PC-9 (cell line): ENCODE measurements at regions of chr16 and their contacts with region 1.

Region 1: DNA sequence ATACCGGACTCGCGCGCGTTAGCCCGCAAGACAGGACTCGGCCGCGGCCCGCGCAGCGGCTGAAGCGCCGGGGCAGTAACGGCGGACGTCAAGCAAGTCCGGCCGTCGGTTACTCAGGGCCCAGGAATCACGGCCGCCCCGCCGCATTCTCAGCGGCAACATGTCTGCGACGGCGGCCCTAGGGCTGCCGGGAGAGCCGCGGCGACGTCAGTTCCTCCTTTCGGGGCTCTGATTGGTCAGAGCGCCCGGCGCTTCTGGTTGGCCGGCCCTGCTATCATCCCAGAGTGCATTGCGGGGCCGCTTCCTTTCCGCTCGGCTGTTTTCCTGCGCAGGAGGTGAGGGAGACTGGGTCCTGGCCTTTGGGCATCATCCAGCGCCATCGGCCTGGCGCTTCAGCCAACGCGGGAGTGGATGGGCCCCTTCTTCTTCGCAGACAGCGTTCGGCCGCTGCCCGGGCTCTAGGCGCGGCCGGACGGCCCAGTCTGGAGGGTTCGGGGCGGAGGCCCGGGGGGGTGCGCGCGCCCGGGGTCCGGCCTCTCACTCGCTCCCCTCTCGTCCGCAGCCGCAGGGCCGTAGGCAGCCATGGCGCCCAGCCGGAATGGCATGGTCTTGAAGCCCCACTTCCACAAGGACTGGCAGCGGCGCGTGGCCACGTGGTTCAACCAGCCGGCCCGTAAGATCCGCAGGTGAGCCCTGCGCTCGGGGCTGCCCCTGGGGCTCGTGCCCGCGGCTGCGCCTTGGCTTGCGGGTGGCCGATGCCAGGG is at the start of gene RPL13:
- DNase-seq: peak; percentile 91 to 95
- H3K4me3 ChIP-seq: peak within 1 kb of the TSS; percentile 92
- H3K27ac ChIP-seq: peak within 1 kb of the TSS; percentile 96
- H3K4me1 ChIP-seq: peaks cover 49% of the 10 kb centered on the region
- H3K27me3 ChIP-seq: no peaks in the 10 kb centered on the region
- CTCF ChIP-seq: no peak
- total RNA-seq, gene RPL13: 2,045 and 3,124 TPM in 2 replicates

Region 2: GRCh38 chr16:89283449-89283848 is 277.1 kb before region 1 on chr16:
- CTCF ChIA-PET with region 1: no interaction called
- POLR2A ChIA-PET with region 1: interaction called, 12 read pairs
- intact Hi-C with region 1: no loop called
- DNase-seq: no peak
- H3K4me3 ChIP-seq: no peak overlapping the region
- H3K27ac ChIP-seq: no peak overlapping the region
- H3K4me1 ChIP-seq: no peaks in the 10 kb centered on the region
- H3K27me3 ChIP-seq: no peaks in the 10 kb centered on the region
- CTCF ChIP-seq: no peak